Mammary epithelial cell (primary cell): ENCODE measurements at regions of chr7 and their contacts with region 1.

Region 1: DNA sequence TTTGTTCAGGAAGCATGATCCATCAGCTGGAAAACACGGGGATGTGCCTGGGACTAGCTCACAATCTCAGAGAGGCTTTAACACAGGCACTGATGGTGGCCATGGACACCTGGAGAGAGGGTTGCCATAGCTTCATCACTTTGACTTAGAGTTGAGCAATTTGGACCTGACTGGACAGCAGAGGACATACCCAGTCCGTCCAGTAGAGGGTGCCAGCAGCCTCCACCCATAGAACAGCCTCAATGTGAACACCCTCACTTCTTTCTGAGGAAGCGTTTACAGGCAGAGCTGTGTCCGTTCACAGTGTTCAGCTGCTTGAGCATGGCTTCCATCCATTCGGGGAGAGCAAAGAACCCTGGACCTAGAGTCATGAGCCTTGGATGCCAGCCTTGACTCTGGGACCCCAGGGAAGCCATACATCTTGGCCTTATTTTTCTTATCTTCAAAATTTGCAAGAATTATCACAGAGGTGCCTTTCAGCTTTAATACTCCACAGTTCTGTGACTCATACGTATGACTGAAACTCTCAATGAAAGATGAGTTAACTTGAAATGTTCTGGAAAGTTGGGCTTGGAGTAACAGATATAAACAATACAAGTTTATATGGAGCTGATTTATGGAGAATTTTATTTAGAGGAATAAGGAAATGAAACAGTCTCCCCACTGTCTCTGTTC is 302.9 kb upstream of the PODXL start:
- DNase-seq: peak; percentile 60
- H3K4me3 ChIP-seq: no peak overlapping the region
- H3K27ac ChIP-seq: no peak overlapping the region
- H3K4me1 ChIP-seq: peaks cover 2% of the 10 kb centered on the region
- H3K27me3 ChIP-seq: no peaks in the 10 kb centered on the region
- CTCF ChIP-seq: peak; percentile 93

Region 2: DNA sequence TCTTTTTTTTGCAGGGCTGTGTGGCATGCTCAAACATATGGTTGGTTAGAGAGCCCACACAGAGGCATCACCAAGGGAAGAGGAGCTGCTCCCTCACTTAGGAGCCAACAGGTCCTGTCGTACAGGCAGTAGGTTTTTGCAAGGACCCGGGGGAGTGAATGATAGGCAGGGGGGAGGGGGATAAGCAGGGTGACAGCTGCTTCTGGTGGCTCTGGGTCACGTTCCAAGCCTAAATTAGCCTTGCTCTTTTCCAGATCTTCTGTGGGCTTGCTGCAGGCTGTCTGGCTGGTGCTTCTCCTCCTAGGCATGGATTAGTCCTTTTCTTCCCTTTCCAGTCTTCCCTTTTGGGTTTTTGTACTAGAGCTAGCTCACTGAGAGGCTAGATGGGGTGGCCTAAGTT is 185.2 kb before region 1 on chr7:
- CTCF ChIA-PET with region 1: no interaction called
- dilution Hi-C with region 1: no loop called
- in situ Hi-C with region 1: no loop called
- intact Hi-C with region 1: no loop called
- DNase-seq: no peak
- H3K4me3 ChIP-seq: no peak overlapping the region
- H3K27ac ChIP-seq: no peak overlapping the region
- H3K4me1 ChIP-seq: no peaks in the 10 kb centered on the region
- H3K27me3 ChIP-seq: peaks cover 6% of the 10 kb centered on the region
- CTCF ChIP-seq: no peak

Region 3: DNA sequence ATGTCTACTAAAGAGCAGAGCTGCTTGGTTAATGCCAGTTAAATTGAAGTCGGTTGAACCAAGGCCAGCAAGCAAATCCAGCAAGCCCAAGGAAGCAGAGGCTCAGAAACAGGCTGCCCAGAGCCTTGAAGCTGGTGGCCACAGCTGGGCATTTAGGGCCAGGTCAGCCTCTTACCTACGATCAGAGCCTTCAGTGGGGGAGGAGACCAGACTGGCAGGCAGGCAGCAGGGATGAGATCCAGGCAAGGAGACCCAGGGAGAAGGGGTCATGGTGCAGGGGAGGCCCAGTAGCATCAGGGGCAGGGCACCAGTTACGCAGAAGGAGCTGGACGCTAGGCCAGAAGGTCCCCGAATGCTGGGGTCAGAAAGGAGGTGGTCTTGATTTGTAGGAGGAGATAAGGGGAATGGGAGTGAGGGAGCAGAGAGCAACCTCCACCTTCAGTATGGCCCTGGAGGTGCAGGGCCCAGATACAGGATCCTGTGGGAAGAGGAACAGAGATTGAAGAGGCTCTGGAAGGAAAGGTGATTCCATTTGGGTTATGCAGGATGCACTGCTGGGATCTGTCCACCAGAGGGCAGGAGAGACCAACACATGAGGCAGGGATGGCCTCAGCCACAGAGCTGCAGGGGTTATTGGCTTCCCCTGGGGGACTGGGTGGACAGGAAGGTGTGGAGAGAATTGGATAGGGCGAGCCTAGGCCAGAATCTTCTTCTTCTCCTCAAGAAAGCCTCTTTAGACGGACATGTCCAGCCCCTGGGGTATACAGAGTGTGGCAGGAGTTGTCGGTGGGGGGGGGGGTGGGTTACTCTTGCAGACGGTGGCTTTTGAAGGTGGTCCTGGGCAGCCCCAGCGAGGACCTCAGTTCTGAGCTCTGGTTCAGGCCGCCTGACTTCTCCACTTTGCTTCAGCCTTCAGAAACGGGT is 170.3 kb before region 1 on chr7:
- CTCF ChIA-PET with region 1: no interaction called
- dilution Hi-C with region 1: no loop called
- in situ Hi-C with region 1: no loop called
- intact Hi-C with region 1: loop called (anchors 5 kb)
- DNase-seq: peak; percentile 31
- H3K4me3 ChIP-seq: no peak overlapping the region
- H3K27ac ChIP-seq: no peak overlapping the region
- H3K4me1 ChIP-seq: peaks cover 3% of the 10 kb centered on the region
- H3K27me3 ChIP-seq: no peaks in the 10 kb centered on the region
- CTCF ChIP-seq: peak; percentile 96

Region 4: GRCh38 chr7:131945313-131945911 is 86.1 kb after region 1 on chr7:
- CTCF ChIA-PET with region 1: no interaction called
- dilution Hi-C with region 1: no loop called
- in situ Hi-C with region 1: no loop called
- intact Hi-C with region 1: loop called (anchors 1 kb)
- DNase-seq: peak; percentile 12
- H3K4me3 ChIP-seq: no peak overlapping the region
- H3K27ac ChIP-seq: no peak overlapping the region
- H3K4me1 ChIP-seq: peaks cover 5% of the 10 kb centered on the region
- H3K27me3 ChIP-seq: no peaks in the 10 kb centered on the region
- CTCF ChIP-seq: peak; percentile 50 to 86

Region 5: DNA sequence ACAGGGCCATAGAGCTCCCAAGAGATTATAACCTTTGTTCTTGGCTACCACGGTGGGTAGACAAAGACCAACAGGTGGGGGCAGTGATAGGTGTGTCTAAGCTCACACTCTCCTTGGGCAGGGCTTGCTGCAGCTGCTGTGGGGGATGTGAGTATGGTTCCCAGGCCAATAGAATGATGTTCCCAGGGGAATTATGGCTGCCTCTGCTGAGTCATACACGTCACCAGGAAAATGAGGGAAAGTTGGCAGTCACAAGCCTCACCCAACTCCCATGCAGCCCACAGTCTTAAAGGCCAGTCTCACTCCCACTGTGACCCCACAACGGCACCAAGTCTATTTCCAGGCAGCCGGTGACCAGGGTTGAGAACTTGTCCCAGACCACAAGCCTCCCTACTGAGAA is 150.5 kb after region 1 on chr7:
- CTCF ChIA-PET with region 1: no interaction called
- dilution Hi-C with region 1: no loop called
- in situ Hi-C with region 1: no loop called
- intact Hi-C with region 1: no loop called
- DNase-seq: no peak
- H3K4me3 ChIP-seq: no peak overlapping the region
- H3K27ac ChIP-seq: no peak overlapping the region
- H3K4me1 ChIP-seq: no peaks in the 10 kb centered on the region
- H3K27me3 ChIP-seq: no peaks in the 10 kb centered on the region
- CTCF ChIP-seq: no peak

Region 6: GRCh38 chr7:132117211-132117610 is 257.9 kb after region 1 on chr7:
- CTCF ChIA-PET with region 1: no interaction called
- dilution Hi-C with region 1: no loop called
- in situ Hi-C with region 1: no loop called
- intact Hi-C with region 1: loop called (anchors 1 kb)
- DNase-seq: peak; percentile 80
- H3K4me3 ChIP-seq: no peak overlapping the region
- H3K27ac ChIP-seq: peak overlapping the region; percentile 64
- H3K4me1 ChIP-seq: peaks cover 29% of the 10 kb centered on the region
- H3K27me3 ChIP-seq: no peaks in the 10 kb centered on the region
- CTCF ChIP-seq: no peak

Region 7: GRCh38 chr7:132249614-132249972 is 390.3 kb after region 1 on chr7:
- CTCF ChIA-PET with region 1: no interaction called
- dilution Hi-C with region 1: no loop called
- in situ Hi-C with region 1: no loop called
- intact Hi-C with region 1: loop called (anchors 1 kb)
- DNase-seq: peak; percentile 6
- H3K4me3 ChIP-seq: no peak overlapping the region
- H3K27ac ChIP-seq: no peak overlapping the region
- H3K4me1 ChIP-seq: peaks cover 18% of the 10 kb centered on the region
- H3K27me3 ChIP-seq: no peaks in the 10 kb centered on the region
- CTCF ChIP-seq: peak; percentile 27 to 56

Region 8: GRCh38 chr7:132343199-132343598 is 483.9 kb after region 1 on chr7:
- CTCF ChIA-PET with region 1: no interaction called
- dilution Hi-C with region 1: no loop called
- in situ Hi-C with region 1: no loop called
- intact Hi-C with region 1: no loop called
- DNase-seq: no peak
- H3K4me3 ChIP-seq: no peak overlapping the region
- H3K27ac ChIP-seq: no peak overlapping the region
- H3K4me1 ChIP-seq: no peaks in the 10 kb centered on the region
- H3K27me3 ChIP-seq: no peaks in the 10 kb centered on the region
- CTCF ChIP-seq: no peak